ENCODE measurements at regions of chr6 and their contacts with region 1.

Region 1: DNA sequence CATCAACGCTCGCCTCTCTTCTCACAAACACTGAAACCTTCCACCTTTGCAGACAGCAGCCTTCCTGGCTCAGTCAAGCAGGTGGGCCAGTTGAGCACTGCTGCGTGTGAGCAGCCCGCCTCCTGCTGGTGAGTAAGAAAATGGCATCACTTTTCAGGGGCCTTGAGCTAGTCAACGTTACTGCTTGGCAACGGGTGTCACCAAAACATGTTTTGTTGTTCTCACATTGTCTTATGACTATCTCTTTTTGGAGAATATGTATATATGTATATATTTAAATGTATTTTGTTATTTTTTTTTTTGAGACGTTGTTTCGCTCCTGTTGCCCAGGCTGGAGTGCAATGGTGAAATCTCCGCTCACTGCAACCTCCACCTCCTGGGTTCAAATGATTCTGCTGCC is 97.0 kb upstream of the AGPAT4 start:
- DNase-seq: peak; percentile 62
- H3K4me3 ChIP-seq: no peak overlapping the region
- H3K27ac ChIP-seq: no peak overlapping the region
- H3K4me1 ChIP-seq: peaks cover 7% of the 10 kb centered on the region
- H3K27me3 ChIP-seq: no peaks in the 10 kb centered on the region
- CTCF ChIP-seq: peak; percentile 91

Region 2: DNA sequence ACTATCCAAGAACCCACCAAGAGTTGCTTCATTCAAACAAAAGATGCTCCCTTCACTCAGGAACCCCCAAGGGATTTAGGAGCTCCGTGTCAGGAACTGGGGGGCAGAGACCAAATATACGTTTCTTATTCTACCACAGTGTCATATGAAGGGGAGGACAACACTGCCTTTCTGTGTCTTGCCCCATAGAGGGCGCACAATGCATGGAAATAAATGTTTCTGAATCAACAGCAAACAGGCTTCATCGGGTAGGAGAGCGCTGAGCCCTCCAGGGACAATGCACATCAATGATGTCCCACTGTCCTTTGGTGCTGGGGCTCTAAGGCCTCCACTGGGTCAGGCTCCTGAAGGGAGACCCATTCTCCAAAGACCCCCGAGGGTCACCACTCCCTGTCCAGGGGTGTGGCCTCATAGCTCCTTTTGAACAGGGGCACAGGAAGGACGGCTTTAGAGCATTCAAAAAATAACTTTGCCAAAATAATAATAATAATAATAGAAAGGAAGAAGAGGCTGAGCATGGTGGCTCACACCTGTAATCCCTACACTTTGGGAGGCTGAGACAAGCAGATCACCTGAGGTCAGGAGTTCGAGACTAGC is 637.7 kb before region 1 on chr6:
- CTCF ChIA-PET with region 1: no interaction called
- POLR2A ChIA-PET with region 1: no interaction called
- intact Hi-C with region 1: loop called (anchors 1 kb)
- DNase-seq: peak; percentile 64
- H3K4me3 ChIP-seq: no peak overlapping the region
- H3K27ac ChIP-seq: no peak overlapping the region
- H3K4me1 ChIP-seq: no peaks in the 10 kb centered on the region
- H3K27me3 ChIP-seq: no peaks in the 10 kb centered on the region
- CTCF ChIP-seq: peak; percentile 80

Region 3: GRCh38 chr6:160930547-160931377 is 440.1 kb before region 1 on chr6:
- CTCF ChIA-PET with region 1: interaction called, 17 read pairs
- POLR2A ChIA-PET with region 1: no interaction called
- intact Hi-C with region 1: loop called (anchors 1 kb)
- DNase-seq: peak; percentile 69
- H3K4me3 ChIP-seq: peak overlapping the region; percentile 33
- H3K27ac ChIP-seq: no peak overlapping the region
- H3K4me1 ChIP-seq: no peaks in the 10 kb centered on the region
- H3K27me3 ChIP-seq: peaks cover 6% of the 10 kb centered on the region
- CTCF ChIP-seq: peak; percentile 95

Region 4: GRCh38 chr6:161101517-161101916 is 269.4 kb before region 1 on chr6:
- CTCF ChIA-PET with region 1: interaction called, 16 read pairs
- POLR2A ChIA-PET with region 1: no interaction called
- intact Hi-C with region 1: loop called (anchors 1 kb)
- DNase-seq: peak; percentile 24
- H3K4me3 ChIP-seq: no peak overlapping the region
- H3K27ac ChIP-seq: no peak overlapping the region
- H3K4me1 ChIP-seq: no peaks in the 10 kb centered on the region
- H3K27me3 ChIP-seq: no peaks in the 10 kb centered on the region
- CTCF ChIP-seq: peak; percentile 50

Region 5: GRCh38 chr6:161279677-161280415 is 91.0 kb before region 1 on chr6:
- CTCF ChIA-PET with region 1: interaction called, 12 read pairs
- POLR2A ChIA-PET with region 1: no interaction called
- intact Hi-C with region 1: no loop called
- DNase-seq: no peak
- H3K4me3 ChIP-seq: no peak overlapping the region
- H3K27ac ChIP-seq: no peak overlapping the region
- H3K4me1 ChIP-seq: no peaks in the 10 kb centered on the region
- H3K27me3 ChIP-seq: no peaks in the 10 kb centered on the region
- CTCF ChIP-seq: no peak

Region 6: DNA sequence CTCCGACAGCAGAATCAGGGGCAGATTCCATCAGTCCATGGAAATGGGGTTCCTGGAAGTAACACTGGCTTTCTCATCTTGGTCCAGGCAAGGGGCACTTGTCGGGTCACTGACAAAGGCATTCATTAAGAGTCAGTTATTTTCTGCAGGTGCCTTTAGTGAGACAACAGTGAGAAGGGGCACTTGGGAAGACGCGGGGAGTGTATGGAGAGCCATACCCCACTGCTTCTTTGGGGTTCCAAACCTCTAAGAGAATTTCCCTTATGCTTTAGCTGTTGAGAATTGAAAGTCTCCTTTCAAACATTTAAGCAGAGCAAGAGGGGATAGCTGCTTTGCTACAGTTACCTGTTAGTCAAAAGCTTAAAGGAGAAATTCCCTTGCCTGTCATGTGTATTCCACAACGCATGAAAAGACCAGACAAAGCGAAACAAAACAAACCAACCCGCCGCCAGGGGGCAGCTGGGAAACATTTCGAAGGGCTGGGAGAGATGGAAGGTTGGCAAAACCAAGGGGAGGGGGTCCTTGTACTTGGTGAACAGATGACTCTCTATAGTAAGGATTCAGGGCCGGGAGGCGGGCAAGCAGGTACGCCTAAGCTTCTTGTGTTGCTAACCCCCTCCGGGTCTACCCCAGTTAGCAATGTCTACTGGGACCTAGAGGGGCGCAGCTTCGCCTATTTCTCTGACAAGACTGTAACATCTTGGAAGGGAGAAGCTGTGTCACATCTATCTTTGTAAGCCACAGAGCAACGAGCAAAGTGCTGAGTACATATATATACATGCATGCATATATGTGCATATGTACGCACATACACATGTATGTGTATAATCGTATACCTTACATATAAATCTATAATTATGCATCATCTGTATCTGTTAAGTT is 377.9 kb after region 1 on chr6:
- CTCF ChIA-PET with region 1: no interaction called
- POLR2A ChIA-PET with region 1: no interaction called
- intact Hi-C with region 1: no loop called
- DNase-seq: peak; percentile 75
- H3K4me3 ChIP-seq: peak overlapping the region; percentile 18
- H3K27ac ChIP-seq: no peak overlapping the region
- H3K4me1 ChIP-seq: no peaks in the 10 kb centered on the region
- H3K27me3 ChIP-seq: no peaks in the 10 kb centered on the region
- CTCF ChIP-seq: peak; percentile 75

Measured in A673 (cell line).